Heart right ventricle (tissue), 16 donors: ENCODE measurements at regions of chr6 and their contacts with region 1.

Region 1: DNA sequence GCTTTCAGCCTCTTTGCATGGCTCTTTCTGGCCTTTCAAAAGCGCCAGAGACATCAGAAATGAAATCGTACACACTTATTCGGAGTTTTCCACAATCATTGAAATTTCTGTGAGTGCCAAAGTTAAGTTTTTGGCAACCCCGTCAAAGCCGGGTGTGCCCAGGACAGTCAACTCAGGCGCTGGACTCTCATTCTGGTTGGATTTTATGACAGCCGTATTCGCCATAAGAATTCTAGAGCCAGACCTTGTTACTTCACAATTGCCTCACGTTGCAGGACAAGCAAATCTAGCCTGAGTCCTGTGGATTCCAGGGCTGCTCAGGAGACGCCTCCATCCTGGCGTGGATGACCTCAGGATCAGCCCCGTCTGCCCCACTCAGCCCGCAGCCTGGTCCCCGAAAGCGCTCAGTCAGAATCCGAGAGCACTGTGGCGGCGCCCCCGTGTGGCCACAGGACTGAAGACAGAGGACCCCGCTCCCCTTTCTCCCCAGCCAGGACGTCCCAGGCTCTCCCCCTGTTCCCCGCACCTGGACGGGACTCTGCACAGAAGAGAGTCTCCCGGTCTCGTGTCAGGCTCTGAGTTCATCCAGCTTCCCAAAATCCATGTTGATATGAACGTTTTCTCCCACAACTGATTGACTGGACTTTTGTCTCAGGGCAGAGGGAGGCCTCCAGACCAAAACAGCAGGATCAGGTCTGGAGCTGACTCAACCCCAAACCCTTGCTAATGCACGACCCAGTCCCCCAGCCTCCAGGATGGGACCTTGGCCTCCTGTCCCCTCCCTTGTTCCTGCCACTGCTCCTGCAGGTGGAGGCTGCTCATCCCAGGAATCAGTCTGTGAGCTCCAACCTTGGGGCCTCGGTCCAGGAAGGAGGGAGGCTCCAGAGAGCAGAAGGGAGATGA is 38.2 kb downstream of the MICA start:
- DNase-seq: peak; percentile 81 to 86
- ATAC-seq: peak; percentile 89 to 99 (median 97)
- H3K4me3 ChIP-seq: peak overlapping the region in 7 of 10 donors; percentile 8 to 38 (median 28)
- H3K27ac ChIP-seq: no peak overlapping the region
- H3K4me1 ChIP-seq: peaks cover 0 to 11% (median 7%) of the 10 kb centered on the region in 9 donors
- H3K27me3 ChIP-seq: peaks cover 0 to 15% (median 0%) of the 10 kb centered on the region in 7 donors
- CTCF ChIP-seq: peak; percentile 70 to 92 (median 89)

Region 2: GRCh38 chr6:31396422-31397152 is 45.0 kb before region 1 on chr6:
- intact Hi-C with region 1: loop called in 9 of 10 experiments (anchors 1 to 5 kb)
- DNase-seq: peak; percentile 78 to 86
- ATAC-seq: peak in 4 of 8 donors; percentile 28 to 42 (median 36)
- H3K4me3 ChIP-seq: peak overlapping the region in 1 of 10 donors; percentile 14
- H3K27ac ChIP-seq: no peak overlapping the region
- H3K4me1 ChIP-seq: peaks cover 4 to 46% (median 34%) of the 10 kb centered on the region in 9 donors
- H3K27me3 ChIP-seq: no peaks in the 10 kb centered on the region
- CTCF ChIP-seq: peak; percentile 83 to 98 (median 93)

Region 3: DNA sequence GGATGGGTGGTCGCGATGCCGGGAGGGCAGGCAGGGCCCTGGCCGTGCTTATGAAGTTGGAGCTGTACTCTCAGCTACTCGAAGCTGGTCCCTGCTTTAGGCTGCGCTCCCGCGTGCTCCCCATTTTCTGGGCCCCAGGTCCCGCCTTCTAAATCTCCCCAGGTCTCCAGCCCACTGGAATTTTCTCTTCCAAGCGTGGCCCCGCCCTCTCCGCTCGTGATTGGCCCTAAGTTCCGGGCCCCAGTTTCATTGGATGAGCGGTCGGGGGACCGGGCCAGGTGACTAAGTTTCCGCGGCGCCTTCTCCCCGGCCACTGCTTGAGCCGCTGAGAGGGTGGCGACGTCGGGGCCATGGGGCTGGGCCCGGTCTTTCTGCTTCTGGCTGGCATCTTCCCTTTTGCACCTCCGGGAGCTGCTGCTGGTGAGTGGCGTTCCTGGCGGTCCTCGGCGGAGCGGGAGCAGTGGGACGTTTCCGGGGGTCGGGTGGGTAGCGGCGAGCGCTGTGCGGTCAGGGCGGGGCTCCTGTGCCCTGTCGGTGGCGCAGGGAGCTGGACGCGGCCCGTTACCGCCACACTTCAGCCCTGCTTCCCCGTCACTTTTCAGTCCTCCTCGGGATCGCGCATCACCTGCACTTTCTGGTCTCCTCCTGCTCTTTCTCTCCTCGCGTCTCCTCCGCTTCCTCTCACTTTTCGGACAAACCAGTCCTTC is 38.2 kb before region 1 on chr6 and contains the start of gene MICA:
- intact Hi-C with region 1: loop called in 5 of 10 experiments (anchors 1 to 5 kb)
- DNase-seq: peak; percentile 83 to 92
- ATAC-seq: peak; percentile 61 to 83 (median 73)
- H3K4me3 ChIP-seq: peak within 1 kb of the TSS; percentile 40 to 93 (median 80)
- H3K27ac ChIP-seq: peak within 1 kb of the TSS in 9 of 10 donors; percentile 53 to 100 (median 97)
- H3K4me1 ChIP-seq: peaks cover 18 to 79% (median 65%) of the 10 kb centered on the region in 9 donors
- H3K27me3 ChIP-seq: no peaks in the 10 kb centered on the region
- CTCF ChIP-seq: peak in 1 of 9 donors; percentile 9
- total RNA-seq, gene MICA: 3.2 to 15.0 (median 8.7) TPM

Region 4: GRCh38 chr6:31597006-31597405 is 155.4 kb after region 1 on chr6:
- intact Hi-C with region 1: no loop called
- DNase-seq: no peak
- ATAC-seq: peak in 6 of 8 donors; percentile 43 to 71 (median 60)
- H3K4me3 ChIP-seq: no peak overlapping the region
- H3K27ac ChIP-seq: no peak overlapping the region
- H3K4me1 ChIP-seq: peaks cover 0 to 10% (median 0%) of the 10 kb centered on the region in 9 donors
- H3K27me3 ChIP-seq: no peaks in the 10 kb centered on the region
- CTCF ChIP-seq: peak in 7 of 9 donors; percentile 26 to 53 (median 46)